CD4-positive, alpha-beta memory T cell (primary cell): ENCODE measurements at regions of chr12 and their contacts with region 1.

Region 1: GRCh38 chr12:28190321-28191050 is at the start of gene CCDC91:
- DNase-seq: peak; percentile 90 to 96 (median 93)
- H3K4me3 ChIP-seq: peak within 1 kb of the TSS; percentile 78 to 94
- H3K4me3 Mint-ChIP-seq: peak within 1 kb of the TSS; percentile 90 to 99 (median 96)
- H3K27ac ChIP-seq: peak within 1 kb of the TSS; percentile 95
- H3K27ac Mint-ChIP-seq: peak within 1 kb of the TSS; percentile 98 to 100 (median 100)
- H3K4me1 ChIP-seq: peaks cover 34% of the 10 kb centered on the region
- H3K4me1 Mint-ChIP-seq: peaks cover 38 to 69% (median 53%) of the 10 kb centered on the region in 4 donors
- H3K27me3 ChIP-seq: no peaks in the 10 kb centered on the region
- H3K27me3 Mint-ChIP-seq: no peaks in the 10 kb centered on the region
- total RNA-seq, gene CCDC91: 83.9 to 88.4 TPM

Region 2: DNA sequence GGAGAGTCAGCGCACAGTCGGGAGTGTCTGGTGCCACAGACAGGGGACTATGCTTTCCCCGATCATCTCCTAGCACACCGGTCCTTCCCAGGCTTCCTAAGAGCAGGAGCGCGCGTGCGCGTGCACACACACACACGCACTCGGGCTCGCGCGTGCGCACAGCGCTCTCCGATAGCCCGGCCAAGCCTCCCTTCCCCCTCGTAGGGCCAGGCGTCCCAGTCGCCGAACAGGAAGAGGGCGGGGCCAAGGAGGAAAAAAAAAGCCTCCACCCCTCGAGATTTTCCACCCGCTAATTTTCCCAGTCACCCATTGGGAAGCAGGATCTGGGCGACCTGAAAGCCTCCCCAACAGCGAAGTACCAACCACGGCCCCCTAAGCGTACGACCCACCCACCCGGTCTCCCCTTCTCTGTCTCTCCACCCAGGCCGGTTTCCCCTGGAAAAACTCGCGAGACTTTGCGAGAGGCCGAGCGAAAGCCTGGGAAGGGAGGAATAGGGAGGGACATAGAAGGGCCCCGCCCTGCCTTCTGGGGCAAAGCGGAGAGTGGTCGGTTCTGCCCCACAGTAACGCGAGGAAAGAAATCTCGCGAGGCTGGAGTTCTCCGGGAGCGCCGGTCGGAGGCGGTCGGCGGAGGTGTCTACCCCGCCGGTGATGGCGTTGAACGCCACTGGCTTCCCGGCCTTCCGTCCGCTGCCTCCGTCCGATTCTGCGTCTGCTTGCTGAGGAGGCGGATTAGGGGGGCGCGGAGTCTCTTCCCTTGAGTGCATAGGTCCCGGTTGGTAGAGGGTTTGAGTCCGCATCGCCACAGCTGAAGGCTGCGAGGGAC is 1252.4 kb before region 1 on chr12 and contains the starts of genes FGFR1OP2 and INTS13:
- CTCF ChIA-PET with region 1: no interaction called
- POLR2A ChIA-PET with region 1: no interaction called
- intact Hi-C with region 1: loop called (anchors 10 kb)
- DNase-seq: peak; percentile 95 to 96 (median 96)
- H3K4me3 ChIP-seq: peak within 1 kb of the TSS; percentile 82 to 92
- H3K4me3 Mint-ChIP-seq: peak within 1 kb of the TSS; percentile 91 to 99 (median 98)
- H3K27ac ChIP-seq: peak within 1 kb of the TSS; percentile 89
- H3K27ac Mint-ChIP-seq: peak within 1 kb of the TSS; percentile 90 to 100 (median 99)
- H3K4me1 ChIP-seq: peaks cover 66% of the 10 kb centered on the region
- H3K4me1 Mint-ChIP-seq: peaks cover 44 to 85% (median 58%) of the 10 kb centered on the region in 4 donors
- H3K27me3 ChIP-seq: no peaks in the 10 kb centered on the region
- H3K27me3 Mint-ChIP-seq: no peaks in the 10 kb centered on the region
- total RNA-seq, gene FGFR1OP2: 92.2 to 94.2 TPM
- total RNA-seq, gene INTS13: 25.6 to 28.7 TPM

Region 3: GRCh38 chr12:27821259-27821973 is 369.1 kb before region 1 on chr12:
- CTCF ChIA-PET with region 1: no interaction called
- POLR2A ChIA-PET with region 1: no interaction called
- intact Hi-C with region 1: loop called (anchors 2 kb)
- DNase-seq: peak in 4 of 5 donors; percentile 41 to 49 (median 46)
- H3K4me3 ChIP-seq: peak overlapping the region; percentile 9 to 34
- H3K4me3 Mint-ChIP-seq: peak overlapping the region; percentile 71 to 89 (median 83)
- H3K27ac ChIP-seq: no peak overlapping the region
- H3K27ac Mint-ChIP-seq: peak overlapping the region; percentile 67 to 94 (median 84)
- H3K4me1 ChIP-seq: peaks cover 34% of the 10 kb centered on the region
- H3K4me1 Mint-ChIP-seq: peaks cover 23 to 35% (median 29%) of the 10 kb centered on the region in 4 donors
- H3K27me3 ChIP-seq: no peaks in the 10 kb centered on the region
- H3K27me3 Mint-ChIP-seq: no peaks in the 10 kb centered on the region

Region 4: GRCh38 chr12:27952510-27952909 is 238.0 kb before region 1 on chr12:
- CTCF ChIA-PET with region 1: no interaction called
- POLR2A ChIA-PET with region 1: no interaction called
- intact Hi-C with region 1: no loop called
- DNase-seq: no peak
- H3K4me3 ChIP-seq: no peak overlapping the region
- H3K4me3 Mint-ChIP-seq: no peak overlapping the region
- H3K27ac ChIP-seq: no peak overlapping the region
- H3K27ac Mint-ChIP-seq: no peak overlapping the region
- H3K4me1 ChIP-seq: no peaks in the 10 kb centered on the region
- H3K4me1 Mint-ChIP-seq: no peaks in the 10 kb centered on the region
- H3K27me3 ChIP-seq: no peaks in the 10 kb centered on the region
- H3K27me3 Mint-ChIP-seq: peaks cover 3 to 7% of the 10 kb centered on the region in 2 donors

Region 5: DNA sequence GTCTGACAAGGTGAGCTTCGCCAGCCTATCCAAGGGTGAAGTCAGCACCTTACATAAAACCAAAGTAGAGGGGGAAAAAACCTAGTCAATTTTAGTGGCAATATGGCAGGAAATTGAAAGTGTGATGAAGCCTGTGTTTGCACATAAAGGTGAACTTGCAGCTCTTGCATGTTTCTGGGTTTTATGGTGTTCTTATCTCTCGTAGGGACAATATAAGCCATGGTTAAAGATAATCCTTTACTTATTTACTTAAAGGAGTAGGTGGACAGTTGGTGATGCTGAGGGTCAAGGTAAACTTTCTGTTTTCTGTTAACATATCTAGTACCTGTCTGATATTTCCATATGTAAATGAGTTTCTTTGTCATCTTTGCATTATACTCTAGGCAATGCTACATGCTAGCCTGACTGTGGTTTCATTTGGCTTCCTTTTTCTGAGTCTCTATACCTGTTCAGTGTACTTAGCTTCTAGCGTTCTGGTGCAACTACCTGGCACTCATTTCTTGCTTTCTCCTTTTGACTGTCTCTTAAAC is 32.6 kb after region 1 on chr12:
- CTCF ChIA-PET with region 1: interaction called, 6 read pairs
- POLR2A ChIA-PET with region 1: interaction called, 27 read pairs
- intact Hi-C with region 1: loop called (anchors 2 kb)
- DNase-seq: peak in 4 of 5 donors; percentile 19 to 31 (median 24)
- H3K4me3 ChIP-seq: no peak overlapping the region
- H3K4me3 Mint-ChIP-seq: peak overlapping the region; percentile 26 to 86 (median 78)
- H3K27ac ChIP-seq: no peak overlapping the region
- H3K27ac Mint-ChIP-seq: peak overlapping the region; percentile 54 to 77 (median 63)
- H3K4me1 ChIP-seq: peaks cover 38% of the 10 kb centered on the region
- H3K4me1 Mint-ChIP-seq: peaks cover 37 to 63% (median 53%) of the 10 kb centered on the region in 4 donors
- H3K27me3 ChIP-seq: no peaks in the 10 kb centered on the region
- H3K27me3 Mint-ChIP-seq: no peaks in the 10 kb centered on the region

Region 6: GRCh38 chr12:29103539-29103974 is 913.1 kb after region 1 on chr12:
- CTCF ChIA-PET with region 1: no interaction called
- POLR2A ChIA-PET with region 1: no interaction called
- intact Hi-C with region 1: loop called (anchors 2 kb)
- DNase-seq: peak; percentile 71 to 83 (median 79)
- H3K4me3 ChIP-seq: peak overlapping the region; percentile 18 to 33
- H3K4me3 Mint-ChIP-seq: peak overlapping the region; percentile 57 to 87 (median 80)
- H3K27ac ChIP-seq: peak overlapping the region; percentile 71
- H3K27ac Mint-ChIP-seq: peak overlapping the region; percentile 85 to 99 (median 98)
- H3K4me1 ChIP-seq: peaks cover 39% of the 10 kb centered on the region
- H3K4me1 Mint-ChIP-seq: peaks cover 30 to 47% (median 37%) of the 10 kb centered on the region in 4 donors
- H3K27me3 ChIP-seq: no peaks in the 10 kb centered on the region
- H3K27me3 Mint-ChIP-seq: no peaks in the 10 kb centered on the region